ENCODE measurements at regions of chr3 and their contacts with region 1.

Region 1: DNA sequence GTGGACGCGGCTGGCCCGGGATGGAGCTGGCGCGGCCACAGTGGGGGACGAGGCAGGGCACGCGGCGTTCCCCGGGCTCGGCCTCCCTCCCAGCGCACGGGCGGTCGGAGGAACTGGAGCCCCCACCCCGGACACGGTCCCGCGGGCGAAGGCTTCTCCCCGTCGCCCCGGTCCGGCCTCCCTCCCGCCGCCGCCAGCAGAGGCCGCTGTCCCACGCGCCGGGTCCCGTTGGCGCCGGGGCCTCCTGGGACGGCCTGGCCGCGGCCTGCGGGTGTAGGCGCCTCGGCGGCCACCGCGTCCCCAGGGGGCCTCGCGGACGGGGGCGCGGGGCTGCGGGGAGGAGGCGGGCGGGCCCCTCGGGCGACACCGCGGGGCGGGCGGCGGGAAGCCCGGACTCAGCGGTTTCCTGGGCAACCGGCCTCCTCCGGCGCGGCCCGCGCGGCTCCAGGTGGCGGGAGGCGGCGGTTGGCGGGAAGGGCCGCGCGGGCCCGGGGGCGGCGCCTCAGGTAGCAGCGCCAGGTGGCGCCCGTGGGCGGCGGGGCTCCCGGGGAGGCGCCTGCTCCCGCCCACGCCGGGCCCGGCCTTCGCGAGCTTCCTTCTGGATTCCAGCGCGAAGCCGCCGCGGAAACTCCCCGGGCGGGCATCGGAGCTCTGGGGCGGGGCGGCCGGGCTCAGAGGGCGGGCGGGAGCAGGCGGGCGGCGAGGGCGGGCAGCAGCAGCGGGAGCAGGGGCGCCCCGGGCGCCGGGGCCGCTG is 26.7 kb downstream of the MELTF start:
- DNase-seq: peak; percentile 97
- CTCF ChIP-seq: peak; percentile 88

Region 2: GRCh38 chr3:196726788-196727675 is 275.8 kb before region 1 on chr3:
- in situ Hi-C with region 1: no loop called
- DNase-seq: no peak
- CTCF ChIP-seq: no peak

Region 3: GRCh38 chr3:197186887-197187588 is 184.2 kb after region 1 on chr3:
- in situ Hi-C with region 1: loop called (anchors 25 kb)
- DNase-seq: peak; percentile 34
- CTCF ChIP-seq: peak; percentile 73

Region 4: GRCh38 chr3:197298341-197298857 is 295.5 kb after region 1 on chr3 and contains the start of gene DLG1:
- in situ Hi-C with region 1: no loop called
- DNase-seq: peak; percentile 91
- CTCF ChIP-seq: no peak

Region 5: DNA sequence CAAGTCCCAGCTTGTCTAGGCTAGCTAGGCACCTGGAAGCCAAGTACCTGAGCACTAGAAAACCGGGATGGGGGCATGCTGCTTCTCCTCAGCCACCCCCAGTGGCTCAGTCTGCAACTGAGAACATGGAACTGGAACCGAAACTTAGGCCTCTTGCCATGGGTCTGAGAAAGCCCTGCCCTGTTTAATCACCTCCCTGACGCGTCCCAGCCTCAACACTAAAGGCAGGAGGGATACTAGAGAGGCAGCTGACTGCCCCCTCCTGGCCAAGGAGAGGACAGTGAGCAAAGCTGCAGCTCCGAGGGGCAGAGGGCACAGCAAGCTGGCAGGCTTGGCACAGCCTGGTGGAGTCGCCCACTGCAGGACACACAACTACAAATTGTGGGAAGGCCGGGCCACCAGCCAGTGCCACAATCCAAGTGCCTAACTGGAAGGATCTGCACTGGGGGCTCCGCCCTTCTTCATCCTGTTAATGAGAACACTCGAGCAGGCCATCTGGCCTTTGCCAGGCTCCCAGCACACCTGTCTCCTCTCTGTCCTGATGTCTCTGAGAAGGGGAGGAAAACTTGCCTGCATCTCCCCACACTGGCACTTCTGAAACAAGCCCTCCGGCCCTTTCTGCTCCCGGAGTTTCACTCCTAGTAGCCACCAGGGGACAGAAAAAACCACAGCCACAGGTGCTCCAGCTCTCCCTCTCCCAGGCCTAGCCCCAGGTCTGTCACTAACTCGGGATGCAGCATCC is 499.2 kb after region 1 on chr3:
- in situ Hi-C with region 1: loop called (anchors 25 kb)
- DNase-seq: peak; percentile 86
- CTCF ChIP-seq: peak; percentile 81

Measured in GM13977 (cell line).